Endothelial cell of umbilical vein (primary cell): ENCODE measurements at regions of chr12 and their contacts with region 1.

Region 1: DNA sequence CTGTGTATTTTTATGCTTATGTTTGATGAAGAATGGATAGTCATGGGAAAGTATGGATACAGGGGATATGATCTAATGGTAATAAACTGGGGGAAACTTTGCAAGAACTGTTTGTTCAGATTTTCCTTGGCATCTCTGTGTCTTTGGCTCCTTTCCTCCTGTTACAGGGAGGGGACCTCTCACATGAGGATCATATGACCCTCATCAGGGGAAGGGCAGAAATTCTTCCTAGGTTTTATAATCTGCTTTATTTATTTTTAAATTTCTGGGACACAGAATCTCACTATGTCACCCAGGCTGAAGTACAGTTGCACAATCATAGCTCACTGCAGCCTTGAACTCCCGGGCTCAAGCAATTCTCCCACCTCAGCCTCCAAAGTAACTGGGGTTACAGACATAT is 526.5 kb downstream of the CCER1 start:
- DNase-seq: no peak
- H3K4me3 ChIP-seq: no peak overlapping the region
- H3K27ac ChIP-seq: no peak overlapping the region
- H3K4me1 ChIP-seq: no peaks in the 10 kb centered on the region
- H3K27me3 ChIP-seq: no peaks in the 10 kb centered on the region
- CTCF ChIP-seq: no peak
- POLR2A ChIP-seq: no peak

Region 2: DNA sequence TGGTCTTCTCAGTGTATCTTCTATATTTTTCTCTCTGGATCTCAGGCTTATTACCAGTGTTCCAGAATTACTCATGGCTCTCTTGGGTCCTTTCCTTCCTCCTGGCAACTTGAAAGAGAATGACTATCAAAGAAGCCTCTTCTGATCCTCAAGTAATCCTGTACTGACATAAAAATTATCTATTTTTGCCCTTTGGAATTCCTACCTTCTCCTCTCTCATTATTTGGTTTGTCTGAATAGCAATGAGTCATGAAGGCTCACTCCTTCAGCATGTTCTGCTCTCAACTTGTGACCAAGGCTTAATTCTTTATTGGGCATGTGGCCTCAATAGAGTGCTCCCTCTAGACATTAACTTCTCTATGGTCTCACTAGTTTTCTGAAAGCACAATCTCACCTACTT is 166.2 kb before region 1 on chr12:
- CTCF ChIA-PET with region 1: no interaction called
- POLR2A ChIA-PET with region 1: no interaction called
- dilution Hi-C with region 1: no loop called
- intact Hi-C with region 1: no loop called
- DNase-seq: no peak
- H3K4me3 ChIP-seq: no peak overlapping the region
- H3K27ac ChIP-seq: no peak overlapping the region
- H3K4me1 ChIP-seq: no peaks in the 10 kb centered on the region
- H3K27me3 ChIP-seq: no peaks in the 10 kb centered on the region
- CTCF ChIP-seq: no peak
- POLR2A ChIP-seq: no peak

Region 3: GRCh38 chr12:90322006-90322405 is 106.5 kb before region 1 on chr12:
- CTCF ChIA-PET with region 1: no interaction called
- POLR2A ChIA-PET with region 1: no interaction called
- dilution Hi-C with region 1: no loop called
- intact Hi-C with region 1: no loop called
- DNase-seq: peak; percentile 77
- H3K4me3 ChIP-seq: no peak overlapping the region
- H3K27ac ChIP-seq: no peak overlapping the region
- H3K4me1 ChIP-seq: peaks cover 21% of the 10 kb centered on the region
- H3K27me3 ChIP-seq: no peaks in the 10 kb centered on the region
- CTCF ChIP-seq: no peak
- POLR2A ChIP-seq: no peak

Region 4: DNA sequence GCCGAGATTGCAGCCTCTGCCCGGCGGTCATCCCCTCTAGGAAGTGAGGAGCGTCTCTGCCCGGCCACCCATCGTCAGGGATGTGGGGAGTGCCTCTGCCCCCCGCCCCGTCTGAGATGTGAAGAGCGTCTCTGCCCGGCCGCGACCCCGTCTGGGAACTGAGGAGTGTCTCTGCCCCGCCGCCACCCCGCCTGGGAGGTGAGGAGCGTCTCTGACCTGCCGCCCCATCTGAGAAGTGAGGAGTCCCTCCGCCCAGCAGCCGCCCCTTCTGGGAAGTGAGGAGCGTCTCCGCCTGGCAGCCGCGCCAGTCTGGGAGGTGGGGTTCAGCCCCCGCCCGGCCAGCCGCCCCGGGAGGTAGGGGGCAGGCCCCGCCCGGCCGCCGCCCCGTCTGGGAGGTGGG is 17.5 kb before region 1 on chr12:
- CTCF ChIA-PET with region 1: interaction called, 4 read pairs
- POLR2A ChIA-PET with region 1: no interaction called
- dilution Hi-C with region 1: no loop called
- intact Hi-C with region 1: loop called (anchors 1 kb)
- DNase-seq: no peak
- H3K4me3 ChIP-seq: no peak overlapping the region
- H3K27ac ChIP-seq: no peak overlapping the region
- H3K4me1 ChIP-seq: no peaks in the 10 kb centered on the region
- H3K27me3 ChIP-seq: no peaks in the 10 kb centered on the region
- CTCF ChIP-seq: no peak
- POLR2A ChIP-seq: no peak